Psoas muscle (tissue), 8 donors: ENCODE measurements at regions of chr11 and their contacts with region 1.

Region 1: DNA sequence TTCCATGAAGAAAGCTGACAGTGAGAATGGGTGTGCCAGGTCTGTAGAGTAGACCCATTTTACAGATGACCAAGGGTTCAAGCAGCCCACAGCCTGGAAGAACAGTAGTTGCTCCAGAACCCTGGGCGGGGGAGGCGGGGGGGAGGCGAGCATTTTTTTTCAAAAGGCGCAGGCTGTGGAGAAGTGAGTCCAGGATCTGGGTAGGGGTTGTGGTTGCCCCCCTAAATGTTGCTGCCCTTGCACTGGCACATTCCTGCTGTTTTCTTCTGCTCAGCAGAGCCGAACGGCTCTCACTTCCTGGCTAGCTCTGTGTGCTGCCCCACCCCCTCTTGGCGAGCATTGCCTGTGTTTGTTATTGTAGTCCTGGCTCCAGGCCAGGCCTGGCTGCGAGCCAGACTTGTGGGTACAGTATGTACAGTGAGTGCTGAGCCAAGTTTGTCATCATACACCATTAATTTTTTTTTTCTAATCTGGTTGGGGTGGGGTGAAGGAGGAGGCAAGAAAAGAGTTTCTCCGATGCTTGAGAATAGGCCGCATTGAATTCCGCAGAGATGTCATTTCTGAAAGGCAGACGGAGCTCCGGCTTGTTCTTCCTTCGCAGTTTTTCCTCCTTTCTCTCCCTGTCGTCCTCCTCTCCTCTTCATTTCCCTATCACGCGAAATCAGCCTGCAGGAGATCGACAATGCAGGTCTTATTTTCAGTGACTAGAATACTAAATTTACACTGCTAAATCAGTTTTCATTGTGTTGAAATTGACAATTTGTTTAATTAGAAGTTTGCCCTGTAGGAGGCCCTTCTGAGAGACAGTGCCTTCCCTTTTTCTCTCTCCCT is 100.5 kb downstream of the ZBTB16 start:
- DNase-seq: peak; percentile 99 to 100
- ATAC-seq: peak; percentile 32 to 45 (median 44)
- H3K4me3 ChIP-seq: peak overlapping the region; percentile 51
- H3K27ac ChIP-seq: peak overlapping the region; percentile 99
- H3K4me1 ChIP-seq: peaks cover 91% of the 10 kb centered on the region
- H3K27me3 ChIP-seq: no peaks in the 10 kb centered on the region
- CTCF ChIP-seq: peak; percentile 13

Region 2: GRCh38 chr11:114036156-114036811 is 123.7 kb before region 1 on chr11:
- intact Hi-C with region 1: no loop called
- DNase-seq: peak; percentile 88 to 94
- ATAC-seq: peak; percentile 85 to 93 (median 88)
- H3K4me3 ChIP-seq: peak overlapping the region; percentile 66
- H3K27ac ChIP-seq: peak overlapping the region; percentile 75
- H3K4me1 ChIP-seq: peaks cover 40% of the 10 kb centered on the region
- H3K27me3 ChIP-seq: no peaks in the 10 kb centered on the region
- CTCF ChIP-seq: peak; percentile 87

Region 3: DNA sequence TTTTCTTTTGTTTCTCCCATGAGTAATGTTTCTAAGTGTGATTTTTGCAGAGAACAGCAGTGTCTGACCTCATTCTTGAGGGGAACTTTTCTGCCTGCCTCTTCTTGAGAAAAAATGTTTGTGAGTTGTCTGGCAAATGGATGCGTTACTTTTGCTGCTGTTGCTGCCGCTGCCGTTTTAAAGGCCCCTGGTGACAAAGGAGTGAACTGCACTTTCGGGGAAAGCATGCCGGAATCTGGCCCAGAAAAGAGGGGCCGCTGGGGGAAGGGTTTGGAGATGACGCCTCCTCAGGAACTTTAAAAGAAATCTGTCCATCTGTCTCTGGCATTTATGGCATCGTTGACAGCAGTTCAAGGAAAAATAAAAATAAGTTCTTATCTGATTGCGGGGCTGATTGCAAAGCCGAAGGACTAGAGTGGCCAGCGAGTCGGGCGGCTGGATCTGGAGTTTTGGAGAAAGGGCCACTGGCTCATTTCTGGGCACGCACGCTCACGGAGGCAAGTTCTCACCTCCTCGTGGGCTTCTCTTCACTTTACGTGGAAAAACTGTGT is 84.1 kb before region 1 on chr11:
- intact Hi-C with region 1: loop called in 1 of 2 experiments (anchors 1 kb)
- DNase-seq: peak; percentile 65 to 76
- ATAC-seq: peak in 1 of 4 donors; percentile 4
- H3K4me3 ChIP-seq: peak overlapping the region; percentile 54
- H3K27ac ChIP-seq: peak overlapping the region; percentile 99
- H3K4me1 ChIP-seq: peaks cover 97% of the 10 kb centered on the region
- H3K27me3 ChIP-seq: no peaks in the 10 kb centered on the region
- CTCF ChIP-seq: peak; percentile 78

Region 4: DNA sequence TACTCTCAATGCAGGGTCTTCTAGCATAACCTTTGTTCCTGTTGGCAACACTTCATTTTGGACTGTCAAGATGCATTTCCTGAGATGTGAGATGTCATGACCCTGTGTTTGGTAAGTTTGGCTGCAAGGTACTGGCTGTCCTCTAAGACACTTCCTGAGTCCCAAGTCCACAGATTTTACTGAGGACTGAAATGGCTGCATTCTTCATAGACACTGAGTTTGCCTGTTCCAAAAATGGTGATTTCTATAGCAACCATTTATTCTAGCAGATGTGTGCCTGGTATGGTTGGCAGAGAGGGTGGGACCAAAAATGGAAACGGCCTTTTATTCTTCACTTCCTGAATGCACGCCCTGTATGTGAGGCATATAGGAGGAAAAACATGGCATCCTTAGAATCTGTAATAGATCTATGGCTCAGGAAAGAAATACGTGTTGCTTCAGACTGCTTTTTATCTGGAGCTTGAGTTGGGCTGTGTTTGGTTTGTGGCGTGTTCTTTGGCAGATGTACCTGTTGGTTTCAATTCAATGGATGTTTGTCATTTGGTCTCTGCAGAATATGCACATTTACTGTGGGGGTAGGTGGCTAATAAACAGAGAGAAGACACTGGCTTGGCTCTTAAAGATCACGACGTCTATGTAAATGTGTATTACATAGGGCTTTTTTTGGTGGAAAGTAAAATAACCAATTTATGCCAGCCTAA is 38.1 kb before region 1 on chr11:
- intact Hi-C with region 1: loop called in 1 of 2 experiments (anchors 1 kb)
- DNase-seq: no peak
- ATAC-seq: no peak
- H3K4me3 ChIP-seq: no peak overlapping the region
- H3K27ac ChIP-seq: peak overlapping the region; percentile 99
- H3K4me1 ChIP-seq: peaks cover 89% of the 10 kb centered on the region
- H3K27me3 ChIP-seq: no peaks in the 10 kb centered on the region
- CTCF ChIP-seq: no peak

Region 5: DNA sequence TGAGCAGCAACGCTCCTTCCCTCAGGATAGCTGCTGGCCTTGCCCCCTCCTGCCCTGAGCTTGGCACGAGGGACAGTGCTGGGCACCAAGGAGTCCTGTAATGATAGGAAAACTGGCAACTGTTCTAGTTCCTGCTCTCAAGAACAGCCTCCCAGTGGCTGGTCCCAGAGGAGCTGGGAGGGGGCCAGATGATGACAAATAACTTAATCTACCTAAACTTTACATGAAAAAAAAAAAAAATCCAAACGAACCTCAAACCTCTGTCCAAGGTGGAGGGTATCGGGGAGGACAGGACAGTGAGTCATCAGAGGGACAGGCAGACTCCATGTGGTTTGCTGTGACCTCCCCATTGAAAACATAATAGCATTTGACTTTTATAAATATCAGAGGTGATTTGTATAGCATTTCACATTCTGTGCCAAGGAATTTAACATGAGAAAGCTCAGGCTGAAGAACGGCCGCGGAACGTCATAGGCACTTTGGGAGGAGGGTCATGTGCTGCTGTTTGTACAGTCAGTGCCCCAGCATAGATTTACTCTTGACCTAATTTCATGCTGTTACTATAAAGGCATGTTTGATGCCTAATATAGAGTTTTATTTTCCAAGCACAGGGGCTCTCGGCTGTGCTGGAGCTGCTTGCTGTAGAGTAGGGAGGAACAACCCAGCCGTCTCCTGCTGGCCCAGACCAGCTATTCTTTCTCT is 37.9 kb after region 1 on chr11:
- intact Hi-C with region 1: loop called in 1 of 2 experiments (anchors 5 kb)
- DNase-seq: peak; percentile 80 to 92
- ATAC-seq: peak; percentile 68 to 85 (median 80)
- H3K4me3 ChIP-seq: peak overlapping the region; percentile 23
- H3K27ac ChIP-seq: peak overlapping the region; percentile 91
- H3K4me1 ChIP-seq: peaks cover 96% of the 10 kb centered on the region
- H3K27me3 ChIP-seq: no peaks in the 10 kb centered on the region
- CTCF ChIP-seq: no peak